GM12878 (cell line): ENCODE measurements at regions of chr11 and their contacts with region 1.

Region 1: DNA sequence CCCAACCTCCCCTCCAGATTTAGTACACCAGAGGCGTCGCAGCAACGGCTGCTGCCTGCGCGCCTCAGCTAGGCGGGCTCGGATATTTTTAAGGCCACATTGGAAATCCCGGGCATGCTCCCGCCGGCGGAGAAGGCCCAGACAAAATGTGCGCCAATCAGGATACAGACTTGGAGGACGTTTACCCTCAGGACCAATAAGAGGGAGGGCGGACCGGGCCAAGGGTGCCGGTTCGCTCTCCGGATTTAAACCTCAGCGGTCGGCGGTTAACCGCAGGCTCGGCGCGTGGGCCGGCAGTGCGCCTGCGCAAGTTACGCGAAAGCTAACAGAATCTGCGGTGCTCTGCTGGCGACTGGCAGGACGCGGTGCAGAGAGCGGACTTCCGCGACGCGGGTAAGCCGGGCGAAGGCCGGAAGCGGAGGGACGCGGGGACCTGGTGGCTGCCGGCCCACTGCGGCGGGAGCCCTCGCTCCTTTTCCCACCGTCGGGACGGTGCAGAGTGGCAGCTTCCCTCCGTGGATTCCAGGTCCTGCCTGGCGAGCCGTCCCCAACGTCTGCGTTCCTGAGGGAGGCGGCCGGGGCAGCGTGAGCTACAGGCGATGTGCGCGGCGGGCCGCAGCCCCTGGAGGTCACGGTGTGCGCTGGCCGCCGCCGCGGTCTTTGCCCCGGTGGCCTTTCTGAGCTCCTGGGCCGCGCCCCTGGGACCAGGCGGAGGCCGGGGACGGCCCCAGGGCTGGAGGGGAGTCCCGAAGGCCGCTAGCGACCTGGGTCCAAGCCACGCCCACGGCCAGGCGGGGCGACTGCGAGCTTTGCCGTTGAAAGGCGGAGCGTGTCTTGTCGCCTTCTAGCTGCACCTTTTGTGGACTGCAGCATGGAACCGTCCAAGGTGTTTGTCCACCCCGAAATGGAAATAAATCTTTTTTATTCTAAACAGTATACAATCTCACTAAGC is at the start of gene HYLS1:
- DNase-seq: peak; percentile 86
- ATAC-seq: peak; percentile 92
- H3K4me3 ChIP-seq: peak within 1 kb of the TSS; percentile 81
- H3K27ac ChIP-seq: peak within 1 kb of the TSS; percentile 90
- H3K4me1 ChIP-seq: no peaks in the 10 kb centered on the region
- H3K27me3 ChIP-seq: no peaks in the 10 kb centered on the region
- CTCF ChIP-seq: peak; percentile 24 to 39 (median 28); a peak in 4 of 6 replicates
- EP300 ChIP-seq: peak in 1 of 2 experiments; percentile 77; a peak in 2 of 4 replicates
- POLR2A ChIP-seq: peak; percentile 84
- RAD21 ChIP-seq: no peak
- polyA plus RNA-seq, gene HYLS1: 16.7 to 35.1 TPM

Region 2: GRCh38 chr11:124953753-124954589 is 933.7 kb before region 1 on chr11 and contains the start of gene CCDC15:
- CTCF ChIA-PET with region 1: no interaction called
- POLR2A ChIA-PET with region 1: no interaction called
- RAD21 ChIA-PET with region 1: no interaction called
- SMC1A ChIA-PET with region 1: no interaction called
- in situ Hi-C with region 1: loop called (anchors 25 kb)
- intact Hi-C with region 1: no loop called
- DNase-seq: peak; percentile 87
- ATAC-seq: peak; percentile 99
- H3K4me3 ChIP-seq: peak within 1 kb of the TSS; percentile 79
- H3K27ac ChIP-seq: peak within 1 kb of the TSS; percentile 54
- H3K4me1 ChIP-seq: no peaks in the 10 kb centered on the region; the same call in 1 of the 2 replicates
- H3K27me3 ChIP-seq: no peaks in the 10 kb centered on the region
- CTCF ChIP-seq: no peak
- EP300 ChIP-seq: 0 out of 4 replicates have a peak, but pooled peaks of 1 of the 2 experiments have one; percentile 18
- POLR2A ChIP-seq: peak; percentile 99
- RAD21 ChIP-seq: no peak
- polyA plus RNA-seq, gene CCDC15: 2.0 to 2.8 TPM

Region 3: DNA sequence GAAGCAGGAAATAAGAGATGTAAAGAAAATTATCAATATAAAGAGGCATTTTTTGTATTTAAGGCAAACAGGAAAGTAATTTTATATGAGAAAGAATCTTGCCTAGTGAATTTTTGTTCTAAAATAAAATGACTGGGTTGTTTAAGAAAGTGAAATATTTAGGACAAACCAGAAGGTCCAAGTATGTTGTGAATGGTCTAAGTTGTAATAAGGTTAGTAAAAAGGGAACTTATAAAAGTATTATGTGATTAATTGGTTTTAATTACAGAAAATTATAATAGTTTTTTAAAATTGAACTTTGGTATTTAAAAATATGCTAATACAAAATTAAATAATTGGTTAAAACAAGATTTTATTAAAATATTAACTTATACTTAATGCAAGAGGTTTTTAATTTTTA is 344.9 kb before region 1 on chr11:
- CTCF ChIA-PET with region 1: no interaction called
- POLR2A ChIA-PET with region 1: no interaction called
- RAD21 ChIA-PET with region 1: no interaction called
- SMC1A ChIA-PET with region 1: no interaction called
- in situ Hi-C with region 1: no loop called
- intact Hi-C with region 1: no loop called
- DNase-seq: no peak
- ATAC-seq: no peak
- H3K4me3 ChIP-seq: no peak overlapping the region
- H3K27ac ChIP-seq: no peak overlapping the region
- H3K4me1 ChIP-seq: no peaks in the 10 kb centered on the region
- H3K27me3 ChIP-seq: no peaks in the 10 kb centered on the region
- CTCF ChIP-seq: no peak
- EP300 ChIP-seq: no peak
- POLR2A ChIP-seq: no peak
- RAD21 ChIP-seq: no peak

Region 4: DNA sequence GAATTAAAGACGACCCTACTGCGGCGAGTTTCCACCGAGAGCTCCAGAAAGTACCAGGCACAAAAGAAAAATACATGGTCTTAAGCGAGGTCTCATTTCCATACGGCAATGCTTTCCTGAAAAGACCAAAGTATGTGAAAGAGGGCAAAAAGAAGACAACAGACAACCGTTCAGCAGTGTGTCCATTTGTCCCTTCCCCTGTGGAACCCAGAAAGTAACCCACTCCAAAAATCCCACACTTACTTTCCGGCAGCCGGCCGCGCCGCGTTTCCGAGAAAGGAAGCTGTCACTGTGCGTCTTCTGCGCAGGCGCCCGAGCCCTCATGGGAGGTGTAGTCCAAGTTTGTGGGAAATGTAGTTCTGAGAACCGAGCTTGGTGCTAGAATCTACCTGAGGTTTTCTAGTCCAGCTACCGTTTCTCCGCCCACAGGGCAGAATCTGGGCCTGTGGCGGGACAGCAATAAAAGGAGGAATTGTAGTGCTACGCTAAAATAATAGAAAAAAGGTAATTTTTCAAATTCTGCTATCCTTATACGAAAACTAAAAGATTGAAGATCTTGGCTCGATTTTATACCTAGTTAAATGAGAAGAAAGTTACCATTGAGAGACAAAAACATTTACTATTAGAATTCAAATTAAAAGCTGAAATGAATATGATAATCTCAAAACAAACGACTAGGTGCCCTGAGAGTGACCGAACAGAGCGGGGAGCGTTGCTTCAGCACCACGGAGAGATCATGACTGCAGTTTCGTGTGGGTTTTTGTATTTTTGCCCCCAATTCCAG is 15.5 kb after region 1 on chr11 and contains the start of gene PUS3:
- CTCF ChIA-PET with region 1: interaction called, 10 read pairs
- POLR2A ChIA-PET with region 1: interaction called, 13 read pairs
- RAD21 ChIA-PET with region 1: interaction called, 8 read pairs
- SMC1A ChIA-PET with region 1: interaction called, 5 read pairs
- in situ Hi-C with region 1: no loop called
- intact Hi-C with region 1: no loop called
- DNase-seq: peak; percentile 52
- ATAC-seq: peak; percentile 99
- H3K4me3 ChIP-seq: peak within 1 kb of the TSS; percentile 84
- H3K27ac ChIP-seq: peak within 1 kb of the TSS; percentile 64
- H3K4me1 ChIP-seq: peaks cover 4% of the 10 kb centered on the region; the same call in 1 of the 2 replicates
- H3K27me3 ChIP-seq: peaks cover 3 to 6% of the 10 kb centered on the region in 2 experiments; a peak in 3 of 4 replicates
- CTCF ChIP-seq: no peak
- EP300 ChIP-seq: no peak
- POLR2A ChIP-seq: peak; percentile 76
- RAD21 ChIP-seq: no peak
- polyA plus RNA-seq, gene PUS3: 19.2 to 20.3 TPM

Region 5: DNA sequence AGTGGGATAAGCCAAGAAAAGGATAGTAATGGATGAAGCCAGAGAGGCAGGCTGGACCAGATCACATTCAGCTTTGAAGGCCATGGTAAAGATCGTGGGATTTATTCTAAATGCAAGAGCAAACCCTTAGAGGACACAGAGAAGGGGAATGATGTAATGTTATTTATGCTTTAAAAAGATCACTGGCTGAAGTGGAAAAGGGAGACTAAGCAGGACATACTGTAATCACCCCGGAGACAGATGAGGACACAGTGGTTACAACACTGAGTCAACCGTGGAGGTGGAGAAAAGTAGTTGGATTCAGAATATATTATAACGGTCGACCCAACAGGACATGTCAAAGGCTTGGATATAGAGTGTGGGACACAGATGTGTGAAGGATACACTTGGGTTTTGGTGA is 136.5 kb after region 1 on chr11:
- CTCF ChIA-PET with region 1: no interaction called
- POLR2A ChIA-PET with region 1: no interaction called
- RAD21 ChIA-PET with region 1: no interaction called
- SMC1A ChIA-PET with region 1: no interaction called
- in situ Hi-C with region 1: no loop called
- intact Hi-C with region 1: no loop called
- DNase-seq: no peak
- ATAC-seq: no peak
- H3K4me3 ChIP-seq: no peak overlapping the region
- H3K27ac ChIP-seq: no peak overlapping the region
- H3K4me1 ChIP-seq: no peaks in the 10 kb centered on the region
- H3K27me3 ChIP-seq: no peaks in the 10 kb centered on the region; a peak in 1 of 4 replicates
- CTCF ChIP-seq: no peak
- EP300 ChIP-seq: no peak
- POLR2A ChIP-seq: no peak
- RAD21 ChIP-seq: no peak

Region 6: GRCh38 chr11:126303623-126304456 is 416.2 kb after region 1 on chr11 and contains the start of gene DCPS:
- CTCF ChIA-PET with region 1: no interaction called
- POLR2A ChIA-PET with region 1: no interaction called
- RAD21 ChIA-PET with region 1: no interaction called
- SMC1A ChIA-PET with region 1: no interaction called
- in situ Hi-C with region 1: no loop called
- intact Hi-C with region 1: no loop called
- DNase-seq: peak; percentile 81
- ATAC-seq: peak; percentile 94
- H3K4me3 ChIP-seq: peak within 1 kb of the TSS; percentile 96
- H3K27ac ChIP-seq: peak within 1 kb of the TSS; percentile 92
- H3K4me1 ChIP-seq: peaks cover 11% of the 10 kb centered on the region
- H3K27me3 ChIP-seq: no peaks in the 10 kb centered on the region
- CTCF ChIP-seq: no peak
- EP300 ChIP-seq: no peak
- POLR2A ChIP-seq: peak; percentile 99
- RAD21 ChIP-seq: no peak
- polyA plus RNA-seq, gene DCPS: 23.5 to 33.2 TPM